Activated CD4-positive, alpha-beta memory T cell treated with anti-CD3 and anti-CD28 coated beads, Interleukin-2, amount 10 ng/mL, durations not matched to agents 7 days and 5 days (primary cell): ENCODE measurements at regions of chr14 and their contacts with region 1.

Region 1: GRCh38 chr14:106174206-106174605 is 647.8 kb downstream of the TMEM121 start:
- DNase-seq: peak; percentile 75
- H3K4me3 Mint-ChIP-seq: peak overlapping the region; percentile 18
- H3K27ac Mint-ChIP-seq: peak overlapping the region; percentile 75
- H3K4me1 Mint-ChIP-seq: peaks cover 61% of the 10 kb centered on the region
- H3K27me3 Mint-ChIP-seq: peaks cover 26% of the 10 kb centered on the region

Region 2: GRCh38 chr14:106185837-106186233 is 11.6 kb after region 1 on chr14:
- CTCF ChIA-PET with region 1: interaction called, 12 read pairs
- POLR2A ChIA-PET with region 1: interaction called, 7 read pairs
- DNase-seq: peak; percentile 78
- H3K4me3 Mint-ChIP-seq: no peak overlapping the region
- H3K27ac Mint-ChIP-seq: peak overlapping the region; percentile 24
- H3K4me1 Mint-ChIP-seq: peaks cover 30% of the 10 kb centered on the region
- H3K27me3 Mint-ChIP-seq: peaks cover 29% of the 10 kb centered on the region